Aorta (tissue), 5 donors: ENCODE measurements at regions of chr18 and their contacts with region 1.

Region 1: DNA sequence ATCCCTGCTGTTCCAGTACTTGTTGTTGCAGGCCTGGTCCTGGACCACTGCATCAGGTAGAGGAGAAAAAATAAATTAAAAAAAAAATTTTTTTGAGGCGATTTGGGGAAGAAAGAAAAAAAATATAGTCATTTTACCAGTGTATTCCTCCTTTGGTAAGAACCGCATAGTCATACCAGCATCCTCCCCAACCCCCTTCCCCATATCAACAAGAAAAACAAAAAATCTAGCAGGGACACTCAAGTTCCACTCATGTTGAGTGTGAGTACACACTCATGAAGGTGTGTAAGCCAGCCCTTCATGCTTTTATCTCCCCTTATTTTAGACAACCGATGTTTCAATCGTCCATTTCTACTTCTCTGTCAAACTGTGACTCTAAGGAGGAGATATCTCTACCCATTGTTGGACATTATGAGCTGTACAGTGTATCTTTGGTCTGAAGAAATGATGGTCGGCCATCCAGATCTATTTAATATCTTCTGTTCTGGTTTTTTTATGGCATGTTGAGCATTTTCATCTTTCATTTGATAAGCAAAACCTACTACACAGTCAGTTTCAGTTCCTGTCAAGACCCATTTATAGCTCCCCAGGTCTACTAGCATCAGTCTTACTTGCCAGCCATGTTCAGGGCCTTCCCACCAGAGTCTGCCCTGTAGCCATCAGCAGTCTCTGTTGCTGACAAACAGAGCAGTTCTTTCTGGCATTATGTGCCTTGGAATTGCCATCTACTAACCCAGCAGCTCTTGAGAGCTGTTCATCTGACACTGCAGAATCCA is 20.0 kb downstream of the ELP2 start:
- DNase-seq: no peak
- ATAC-seq: no peak
- H3K4me3 ChIP-seq: no peak overlapping the region
- H3K27ac ChIP-seq: no peak overlapping the region
- H3K4me1 ChIP-seq: no peaks in the 10 kb centered on the region
- H3K27me3 ChIP-seq: no peaks in the 10 kb centered on the region

Region 2: DNA sequence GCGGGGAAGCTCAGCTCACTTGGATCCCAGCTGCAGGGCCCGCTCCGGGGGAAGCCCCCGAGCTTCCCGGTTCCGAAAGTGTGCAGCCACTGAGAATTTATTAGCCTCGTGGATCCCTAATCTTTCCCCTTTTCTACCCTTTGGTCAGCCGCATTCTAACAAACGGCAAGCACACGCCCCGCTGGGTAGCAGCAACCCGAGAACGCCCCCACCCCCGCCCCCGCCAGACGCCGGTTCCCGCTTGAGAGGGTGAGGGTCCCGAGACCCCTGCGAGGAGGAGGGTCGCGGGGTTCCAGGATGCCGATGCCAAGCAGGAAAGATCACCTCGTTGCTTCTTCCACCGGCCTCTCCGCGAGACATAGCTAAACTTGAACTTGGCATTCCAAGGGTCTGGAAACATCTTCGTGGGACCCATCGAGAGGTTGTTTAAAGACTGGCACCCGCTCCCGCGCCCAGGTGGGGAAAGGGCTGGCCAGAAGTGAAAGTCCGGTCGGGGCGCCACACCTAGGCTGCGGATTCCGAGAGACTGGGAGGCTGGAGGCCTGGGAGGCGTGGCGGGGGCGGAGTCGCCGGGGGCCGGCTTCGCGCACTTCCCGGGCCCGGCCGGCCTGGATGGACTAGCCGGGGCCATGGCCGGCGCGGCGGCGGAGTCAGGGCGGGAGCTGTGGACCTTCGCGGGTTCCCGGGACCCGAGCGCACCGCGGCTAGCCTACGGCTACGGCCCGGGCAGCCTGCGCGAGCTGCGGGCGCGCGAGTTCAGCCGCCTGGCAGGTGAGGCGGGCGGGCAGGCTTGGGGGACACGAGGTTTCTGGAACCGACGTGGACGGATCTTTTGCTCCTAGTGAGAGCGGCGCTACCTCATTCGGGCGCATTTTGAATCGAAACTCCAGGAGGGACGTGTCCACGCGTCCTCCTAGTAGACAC is 37.5 kb after region 1 on chr18 and contains the start of gene MOCOS:
- intact Hi-C with region 1: loop called in 1 of 2 experiments (anchors 5 kb)
- DNase-seq: peak; percentile 87 to 94
- ATAC-seq: peak; percentile 93
- H3K4me3 ChIP-seq: peak within 1 kb of the TSS; percentile 70 to 88
- H3K27ac ChIP-seq: peak within 1 kb of the TSS in 1 of 2 donors; percentile 18
- H3K4me1 ChIP-seq: no peaks in the 10 kb centered on the region
- H3K27me3 ChIP-seq: no peaks in the 10 kb centered on the region
- total RNA-seq, gene MOCOS: 1.7 to 4.4 TPM